Thyroid gland (tissue), 4 donors: ENCODE measurements at regions of chrX and their contacts with region 1.

Region 1: DNA sequence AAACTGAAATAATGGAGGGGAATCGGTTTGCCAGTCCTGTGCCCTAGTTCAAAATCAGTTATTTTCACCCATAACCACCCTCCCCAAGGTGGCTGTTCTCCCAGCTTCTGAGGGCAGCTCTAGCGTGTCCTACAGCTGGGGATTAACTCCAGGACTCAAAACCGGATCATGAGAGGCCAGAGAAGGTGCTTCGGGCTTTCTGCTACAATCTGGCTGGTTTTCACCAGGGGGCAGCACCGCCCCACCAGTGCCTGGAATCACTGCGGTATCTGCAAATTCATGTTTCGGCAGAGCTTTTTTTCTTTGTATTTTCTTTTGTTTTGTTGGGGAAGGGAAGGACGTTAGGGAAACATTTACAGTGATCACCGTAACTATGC is 28.4 kb downstream of the PDHA1 start:
- DNase-seq: peak; percentile 66 to 74
- H3K4me3 ChIP-seq: peak overlapping the region in 1 of 3 donors; percentile 12
- H3K27ac ChIP-seq: no peak overlapping the region
- H3K4me1 ChIP-seq: no peaks in the 10 kb centered on the region
- H3K27me3 ChIP-seq: no peaks in the 10 kb centered on the region
- CTCF ChIP-seq: peak; percentile 13 to 73 (median 56)
- POLR2A ChIP-seq: no peak

Region 2: GRCh38 chrX:19212037-19212436 is 160.1 kb before region 1 on chrX:
- intact Hi-C with region 1: no loop called
- DNase-seq: no peak
- H3K4me3 ChIP-seq: no peak overlapping the region
- H3K27ac ChIP-seq: no peak overlapping the region
- H3K4me1 ChIP-seq: no peaks in the 10 kb centered on the region
- H3K27me3 ChIP-seq: no peaks in the 10 kb centered on the region
- CTCF ChIP-seq: no peak
- POLR2A ChIP-seq: no peak

Region 3: GRCh38 chrX:19514791-19515614 is 142.8 kb after region 1 on chrX and contains the start of gene MAP3K15:
- intact Hi-C with region 1: loop called (anchors 10 kb)
- DNase-seq: peak; percentile 47 to 51
- H3K4me3 ChIP-seq: peak within 1 kb of the TSS in 1 of 3 donors; percentile 12
- H3K27ac ChIP-seq: no peak within 1 kb of the TSS
- H3K4me1 ChIP-seq: peaks cover 0 to 8% of the 10 kb centered on the region in 2 donors
- H3K27me3 ChIP-seq: peaks cover 3% of the 10 kb centered on the region
- CTCF ChIP-seq: peak in 1 of 6 experiments; percentile 19
- POLR2A ChIP-seq: no peak
- total RNA-seq, gene MAP3K15: not detected